GM13976 (cell line): ENCODE measurements at regions of chr7 and their contacts with region 1.

Region 1: DNA sequence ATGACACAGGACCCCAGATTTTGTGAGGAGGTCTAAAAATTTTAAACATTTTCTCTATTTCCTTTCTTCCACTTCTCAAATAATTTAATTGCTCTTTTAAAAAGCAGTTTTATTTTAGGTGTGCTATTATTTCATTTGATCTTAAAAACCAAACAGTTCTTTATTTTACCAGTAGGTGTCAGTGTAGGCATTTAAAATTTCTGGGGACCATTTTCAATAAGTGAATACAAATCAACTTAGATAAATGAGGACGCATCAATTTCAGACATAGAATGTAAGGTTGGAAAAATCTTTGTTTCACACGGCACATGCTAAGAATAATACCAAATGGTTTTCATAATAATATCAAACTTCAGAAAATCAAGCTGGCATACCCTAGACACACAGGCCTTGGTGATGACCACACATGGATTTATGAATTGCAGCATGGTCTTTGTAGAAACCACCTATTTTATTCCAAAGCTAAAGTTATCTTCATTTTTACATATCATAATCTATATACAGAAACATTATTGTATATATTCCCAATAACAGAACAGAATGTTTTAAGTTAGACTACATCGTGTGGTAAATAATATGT is 127.6 kb upstream of the SLC26A5 start:
- DNase-seq: peak; percentile 16
- CTCF ChIP-seq: peak; percentile 37

Region 2: DNA sequence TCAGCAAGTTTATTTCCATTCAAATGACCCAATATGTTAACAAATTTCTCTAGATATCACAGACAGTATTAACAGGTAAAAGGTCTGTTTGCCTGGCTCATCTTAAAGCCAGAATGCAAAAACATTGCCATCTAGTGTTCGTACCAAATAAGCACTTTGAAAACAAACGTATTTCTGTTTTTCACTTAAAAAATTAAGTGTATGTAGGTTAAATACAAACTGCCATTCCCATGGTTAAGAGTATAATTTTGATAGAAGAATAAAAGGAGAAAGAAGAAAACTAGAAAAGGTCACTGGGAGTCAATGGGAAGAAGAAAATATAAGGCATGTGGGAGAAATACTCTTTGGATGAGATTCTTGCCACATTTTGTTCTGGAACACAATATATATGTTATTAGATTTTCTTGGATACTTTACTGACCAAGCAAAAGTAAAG is 583.3 kb after region 1 on chr7:
- in situ Hi-C with region 1: loop called (anchors 25 kb)
- DNase-seq: no peak
- CTCF ChIP-seq: peak; percentile 50